Natural killer cell (primary cell): ENCODE measurements at regions of chr16 and their contacts with region 1.

Region 1: DNA sequence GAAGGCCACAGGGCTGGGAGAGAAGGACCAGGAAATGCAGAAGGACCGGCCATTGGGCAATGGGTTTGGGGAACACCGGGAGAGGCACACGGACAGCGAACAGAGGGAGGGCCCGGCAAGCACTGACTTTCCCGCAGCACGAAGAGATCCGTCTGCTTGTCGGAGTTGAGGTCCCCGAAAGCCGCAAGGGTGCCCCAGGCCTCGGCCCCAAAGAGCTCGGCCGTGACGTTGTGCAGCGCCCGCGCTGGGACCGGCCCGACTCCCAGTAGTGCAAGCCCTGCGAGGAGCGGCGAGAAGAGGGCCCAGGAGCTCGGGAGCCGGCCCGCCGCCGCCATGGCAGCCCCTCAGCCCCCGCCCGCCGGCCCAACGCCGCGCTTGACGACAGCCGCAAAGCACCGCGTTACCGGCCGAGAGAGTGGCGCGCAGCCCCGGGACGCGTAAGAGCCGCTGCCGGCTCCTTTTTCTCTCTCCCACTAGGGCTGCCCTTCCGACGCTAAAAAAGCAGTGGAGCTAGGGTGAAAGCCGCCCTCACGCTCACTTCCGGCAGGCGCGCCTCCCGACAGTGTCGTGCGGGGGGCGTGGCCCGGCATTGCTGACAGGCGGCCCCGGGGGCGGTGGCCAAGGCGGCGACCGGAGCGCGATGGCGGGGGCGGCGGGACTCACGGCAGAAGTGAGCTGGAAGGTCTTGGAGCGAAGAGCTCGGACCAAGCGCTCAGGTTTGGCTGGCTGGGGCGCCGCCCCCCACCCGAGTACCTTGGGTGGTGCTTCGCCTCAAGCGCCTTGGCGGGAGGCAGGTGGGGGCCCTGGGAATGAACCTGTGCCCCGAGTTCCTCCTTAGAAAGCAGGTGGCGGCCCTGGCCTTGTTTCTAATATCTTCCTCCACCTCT is at the starts of genes ITFG1 and PHKB:
- DNase-seq: peak; percentile 96 to 97
- ATAC-seq: peak; percentile 89 to 99 (median 92)
- H3K4me3 ChIP-seq: peak within 1 kb of the TSS; percentile 95
- H3K4me3 Mint-ChIP-seq: peak within 1 kb of the TSS; percentile 98
- H3K27ac ChIP-seq: peak within 1 kb of the TSS; percentile 96
- H3K27ac Mint-ChIP-seq: peak within 1 kb of the TSS; percentile 89 to 96
- H3K4me1 ChIP-seq: peaks cover 22% of the 10 kb centered on the region
- H3K4me1 Mint-ChIP-seq: peaks cover 43 to 61% of the 10 kb centered on the region in 2 donors
- H3K27me3 ChIP-seq: no peaks in the 10 kb centered on the region
- H3K27me3 Mint-ChIP-seq: no peaks in the 10 kb centered on the region
- CTCF ChIP-seq: no peak
- total RNA-seq, gene ITFG1: 30.4 to 44.1 (median 38.2) TPM
- total RNA-seq, gene PHKB: 54.4 to 64.0 (median 58.5) TPM

Region 2: GRCh38 chr16:47446431-47446830 is 14.5 kb before region 1 on chr16:
- intact Hi-C with region 1: no loop called
- DNase-seq: no peak
- ATAC-seq: no peak
- H3K4me3 ChIP-seq: no peak overlapping the region
- H3K4me3 Mint-ChIP-seq: no peak overlapping the region
- H3K27ac ChIP-seq: no peak overlapping the region
- H3K27ac Mint-ChIP-seq: no peak overlapping the region
- H3K4me1 ChIP-seq: no peaks in the 10 kb centered on the region
- H3K4me1 Mint-ChIP-seq: peaks cover 5 to 14% of the 10 kb centered on the region in 2 donors
- H3K27me3 ChIP-seq: no peaks in the 10 kb centered on the region
- H3K27me3 Mint-ChIP-seq: no peaks in the 10 kb centered on the region
- CTCF ChIP-seq: no peak

Region 3: DNA sequence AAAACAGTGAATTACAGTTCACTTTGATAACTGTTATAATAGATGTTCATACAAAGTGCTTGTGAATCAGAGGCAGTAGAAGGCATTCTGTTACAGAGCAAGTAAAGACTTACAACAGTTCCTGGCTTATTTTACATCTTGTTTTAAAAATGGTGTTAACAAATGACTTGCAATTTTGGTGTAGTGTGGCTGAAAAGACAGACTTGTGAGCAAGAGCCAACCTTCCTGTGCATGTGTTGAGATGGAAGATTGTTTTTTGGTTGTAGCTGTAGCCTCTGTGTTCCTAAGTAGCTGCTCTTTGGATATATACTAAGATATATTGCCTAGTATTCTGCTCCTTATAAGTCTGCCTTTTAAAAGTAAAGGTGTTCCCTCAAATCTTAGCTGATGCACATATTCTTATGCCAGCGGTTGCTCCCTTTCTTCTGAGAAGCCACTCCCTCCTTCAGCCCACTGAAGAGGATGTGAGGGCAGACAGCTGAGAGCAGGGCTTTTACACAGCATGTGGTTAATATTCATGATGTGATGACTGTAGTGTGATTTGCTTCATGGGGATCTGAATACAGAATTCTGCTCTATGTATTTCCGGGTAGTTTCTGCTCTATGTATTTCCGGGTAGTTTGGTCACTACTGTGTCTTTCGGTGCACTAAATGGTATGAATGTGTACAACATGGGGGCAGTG is 182.5 kb after region 1 on chr16:
- intact Hi-C with region 1: loop called (anchors 1 kb)
- DNase-seq: peak; percentile 17 to 20
- ATAC-seq: peak; percentile 94 to 98 (median 97)
- H3K4me3 ChIP-seq: no peak overlapping the region
- H3K4me3 Mint-ChIP-seq: peak overlapping the region; percentile 60
- H3K27ac ChIP-seq: peak overlapping the region; percentile 47
- H3K27ac Mint-ChIP-seq: peak overlapping the region; percentile 86
- H3K4me1 ChIP-seq: peaks cover 3% of the 10 kb centered on the region
- H3K4me1 Mint-ChIP-seq: peaks cover 26 to 28% of the 10 kb centered on the region in 2 donors
- H3K27me3 ChIP-seq: no peaks in the 10 kb centered on the region
- H3K27me3 Mint-ChIP-seq: no peaks in the 10 kb centered on the region
- CTCF ChIP-seq: no peak